ENCODE measurements at regions of chr17 and their contacts with region 1.

Region 1: DNA sequence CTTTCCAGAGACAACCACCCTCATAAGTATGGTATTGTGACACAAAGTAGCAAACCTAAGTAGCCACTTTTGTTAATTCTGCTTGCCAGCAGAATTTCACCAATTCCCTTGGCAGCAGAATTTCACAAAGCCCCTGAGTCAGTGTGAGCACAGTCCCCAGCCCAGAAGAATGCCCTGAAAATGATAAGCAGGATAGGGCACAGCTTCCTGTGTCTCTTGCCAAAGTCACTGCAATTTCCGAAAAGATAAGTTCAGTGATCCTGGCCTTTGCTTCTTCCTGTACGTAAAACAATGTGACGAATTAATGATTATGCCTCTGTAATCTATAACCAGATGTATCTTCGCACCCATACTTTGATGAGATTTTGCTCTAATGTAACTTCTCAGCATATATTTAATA is 16.0 kb upstream of the WIPF2 start:
- DNase-seq: no peak
- H3K4me3 ChIP-seq: no peak overlapping the region
- H3K27ac ChIP-seq: peak overlapping the region in 7 of 8 donors; percentile 58 to 78 (median 72)
- H3K4me1 ChIP-seq: peaks cover 3 to 39% (median 20%) of the 10 kb centered on the region in 6 donors
- H3K27me3 ChIP-seq: peaks cover 0 to under 1% (median 0%) of the 10 kb centered on the region in 7 donors
- CTCF ChIP-seq: no peak
- POLR2A ChIP-seq: no peak

Region 2: GRCh38 chr17:40290629-40291287 is 87.6 kb after region 1 on chr17:
- intact Hi-C with region 1: loop called (anchors 5 kb)
- DNase-seq: no peak
- H3K4me3 ChIP-seq: no peak overlapping the region
- H3K27ac ChIP-seq: no peak overlapping the region
- H3K4me1 ChIP-seq: peaks cover 7 to 43% (median 19%) of the 10 kb centered on the region in 6 donors
- H3K27me3 ChIP-seq: no peaks in the 10 kb centered on the region
- CTCF ChIP-seq: peak; percentile 20 to 70 (median 57)
- POLR2A ChIP-seq: no peak

Measured in spleen (tissue), 13 donors.